ENCODE measurements at regions of chr2 and their contacts with region 1.

Region 1: GRCh38 chr2:215238492-215239119 is 73.3 kb upstream of the ATIC start:
- DNase-seq: peak; percentile 28
- H3K4me3 ChIP-seq: no peak overlapping the region
- H3K27ac ChIP-seq: no peak overlapping the region
- H3K4me1 ChIP-seq: peaks cover 26% of the 10 kb centered on the region
- H3K27me3 ChIP-seq: no peaks in the 10 kb centered on the region
- CTCF ChIP-seq: no peak

Region 2: DNA sequence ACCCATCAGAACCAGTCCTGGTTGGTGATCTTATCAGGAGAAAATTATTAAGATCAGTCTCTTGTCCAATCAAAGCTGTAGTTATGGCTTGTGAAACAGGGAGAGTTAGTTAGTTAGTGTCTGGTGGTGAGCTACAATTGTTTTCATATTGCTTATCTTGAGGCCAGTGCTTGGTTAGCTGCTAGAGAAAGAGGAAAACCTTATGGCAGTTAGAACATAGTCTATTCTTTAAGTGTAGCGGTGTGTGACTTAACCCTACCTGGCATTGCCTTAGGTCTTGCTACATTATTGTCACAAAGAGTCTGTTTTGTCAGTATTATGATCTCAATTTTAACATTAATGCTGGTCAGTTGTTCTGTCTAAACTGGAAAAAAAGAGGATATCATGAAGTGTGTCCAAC is 88.7 kb before region 1 on chr2:
- CTCF ChIA-PET with region 1: no interaction called
- POLR2A ChIA-PET with region 1: interaction called, 16 read pairs
- intact Hi-C with region 1: no loop called
- DNase-seq: no peak
- H3K4me3 ChIP-seq: no peak overlapping the region
- H3K27ac ChIP-seq: no peak overlapping the region
- H3K4me1 ChIP-seq: no peaks in the 10 kb centered on the region
- H3K27me3 ChIP-seq: no peaks in the 10 kb centered on the region
- CTCF ChIP-seq: no peak